ENCODE measurements at regions of chr9 and their contacts with region 1.

Region 1: GRCh38 chr9:92140074-92140753 is 25.0 kb upstream of the SPTLC1 start:
- DNase-seq: peak; percentile 80
- ATAC-seq: peak; percentile 66
- H3K4me3 Mint-ChIP-seq: no peak overlapping the region
- H3K27ac Mint-ChIP-seq: no peak overlapping the region
- H3K4me1 Mint-ChIP-seq: peaks cover 10% of the 10 kb centered on the region
- H3K27me3 Mint-ChIP-seq: peaks cover 38% of the 10 kb centered on the region

Region 2: GRCh38 chr9:92115071-92115858 is 24.9 kb before region 1 on chr9 and contains the start of gene SPTLC1:
- CTCF ChIA-PET with region 1: interaction called, 26 read pairs
- POLR2A ChIA-PET with region 1: interaction called, 3 read pairs
- DNase-seq: peak; percentile 96
- ATAC-seq: peak; percentile 97
- H3K4me3 Mint-ChIP-seq: peak within 1 kb of the TSS; percentile 98
- H3K27ac Mint-ChIP-seq: peak within 1 kb of the TSS; percentile 99
- H3K4me1 Mint-ChIP-seq: peaks cover 38% of the 10 kb centered on the region
- H3K27me3 Mint-ChIP-seq: peaks cover 3% of the 10 kb centered on the region
- total RNA-seq, gene SPTLC1: 47.7 to 52.5 TPM

Region 3: GRCh38 chr9:92176068-92176799 is 36.0 kb after region 1 on chr9:
- CTCF ChIA-PET with region 1: interaction called, 28 read pairs
- POLR2A ChIA-PET with region 1: no interaction called
- DNase-seq: no peak
- ATAC-seq: no peak
- H3K4me3 Mint-ChIP-seq: no peak overlapping the region
- H3K27ac Mint-ChIP-seq: no peak overlapping the region
- H3K4me1 Mint-ChIP-seq: no peaks in the 10 kb centered on the region
- H3K27me3 Mint-ChIP-seq: peaks cover under 1% of the 10 kb centered on the region

Region 4: GRCh38 chr9:92242260-92243136 is 102.3 kb after region 1 on chr9:
- CTCF ChIA-PET with region 1: interaction called, 50 read pairs
- POLR2A ChIA-PET with region 1: interaction called, 3 read pairs
- DNase-seq: no peak
- ATAC-seq: no peak
- H3K4me3 Mint-ChIP-seq: no peak overlapping the region
- H3K27ac Mint-ChIP-seq: peak overlapping the region; percentile 16
- H3K4me1 Mint-ChIP-seq: no peaks in the 10 kb centered on the region
- H3K27me3 Mint-ChIP-seq: no peaks in the 10 kb centered on the region

Region 5: DNA sequence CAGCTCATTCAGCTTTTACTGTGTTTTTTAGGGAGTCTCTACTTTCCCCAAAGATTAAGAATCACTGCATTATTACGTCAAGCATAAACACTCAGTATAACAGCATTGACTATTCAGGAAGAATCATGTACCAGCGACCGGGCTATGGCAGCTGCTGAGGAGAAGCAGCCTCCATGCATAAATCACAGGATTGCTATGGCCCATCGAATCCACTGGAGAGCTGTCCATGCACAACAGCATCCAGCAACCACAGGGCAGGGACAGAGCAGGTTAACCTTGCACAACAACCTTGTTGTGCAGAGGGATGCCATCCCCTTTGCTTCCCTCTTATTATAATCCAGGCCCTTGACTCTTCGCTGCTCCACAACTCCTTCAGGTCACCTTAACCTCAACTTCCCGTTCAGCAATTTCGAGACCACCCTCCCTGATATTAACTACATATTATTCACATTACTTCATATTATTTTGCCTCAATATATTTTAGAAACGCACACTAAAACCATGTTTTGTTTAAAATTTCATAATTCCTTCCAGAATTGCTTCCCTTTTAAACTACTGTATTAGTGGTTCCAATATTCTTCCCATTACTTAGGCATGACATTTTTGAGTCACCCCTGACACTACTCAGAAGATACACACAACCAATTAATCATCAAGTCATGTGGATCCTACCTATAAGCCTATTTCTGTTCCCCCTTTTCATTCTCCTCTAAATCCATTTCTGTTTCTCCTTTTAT is 152.3 kb after region 1 on chr9:
- CTCF ChIA-PET with region 1: interaction called, 12 read pairs
- POLR2A ChIA-PET with region 1: no interaction called
- DNase-seq: no peak
- ATAC-seq: no peak
- H3K4me3 Mint-ChIP-seq: peak overlapping the region; percentile 95
- H3K27ac Mint-ChIP-seq: peak overlapping the region; percentile 82
- H3K4me1 Mint-ChIP-seq: peaks cover 63% of the 10 kb centered on the region
- H3K27me3 Mint-ChIP-seq: no peaks in the 10 kb centered on the region

Region 6: DNA sequence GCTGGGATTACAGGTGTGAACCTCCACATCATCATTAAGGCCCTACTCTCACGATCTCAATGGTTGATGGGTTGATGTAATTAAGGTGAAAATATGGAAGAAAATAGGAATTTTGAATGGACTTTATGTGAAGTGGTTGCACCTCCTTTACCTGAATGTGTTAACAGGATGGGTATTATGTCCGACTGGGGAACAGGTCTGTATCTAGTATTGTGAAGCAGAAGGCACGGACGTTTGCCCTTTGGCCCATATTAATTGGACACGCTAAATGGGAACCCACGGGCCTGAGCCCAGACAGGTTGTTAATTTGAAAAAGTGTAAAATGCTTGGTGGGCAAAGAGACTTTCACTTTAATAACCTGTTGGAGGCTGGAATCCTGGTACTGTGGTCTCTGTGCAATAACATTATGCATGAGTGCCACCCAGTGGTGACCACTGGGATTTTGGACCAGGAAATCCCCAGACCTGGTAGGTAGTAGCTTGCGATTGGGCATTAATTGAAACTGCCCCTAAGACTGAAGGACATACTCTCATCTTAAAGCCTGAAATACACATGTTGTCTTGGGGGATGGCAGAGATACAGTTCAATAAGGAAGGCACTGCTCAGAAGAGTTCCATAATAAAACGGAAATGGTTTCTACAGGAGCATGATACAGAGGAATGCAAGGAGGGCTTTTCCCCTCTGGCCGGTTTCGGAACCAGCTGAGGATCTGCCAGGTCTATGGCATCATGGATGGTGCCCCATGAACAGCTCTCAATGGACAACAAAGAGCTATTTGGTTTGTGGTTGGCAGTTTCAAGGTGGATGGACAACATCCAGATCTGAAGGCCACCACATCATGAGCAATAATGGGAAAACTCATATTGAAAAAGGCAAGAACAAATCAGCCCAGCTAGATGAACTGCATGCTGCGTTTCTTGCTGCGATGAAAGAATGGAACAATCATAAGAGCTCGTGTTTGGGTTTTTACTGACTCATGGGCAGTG is 650.6 kb after region 1 on chr9:
- CTCF ChIA-PET with region 1: interaction called, 29 read pairs
- POLR2A ChIA-PET with region 1: no interaction called
- DNase-seq: peak; percentile 83
- ATAC-seq: peak; percentile 91
- H3K4me3 Mint-ChIP-seq: no peak overlapping the region
- H3K27ac Mint-ChIP-seq: no peak overlapping the region
- H3K4me1 Mint-ChIP-seq: peaks cover 5% of the 10 kb centered on the region
- H3K27me3 Mint-ChIP-seq: peaks cover 7% of the 10 kb centered on the region